Sigmoid colon (tissue), 7 donors: ENCODE measurements at regions of chr19 and their contacts with region 1.

Region 1: GRCh38 chr19:58182989-58183816 is at the start of gene ZNF274:
- DNase-seq: peak; percentile 98
- H3K4me3 ChIP-seq: peak within 1 kb of the TSS; percentile 62 to 77 (median 68)
- H3K27ac ChIP-seq: peak within 1 kb of the TSS; percentile 91 to 97 (median 94)
- H3K4me1 ChIP-seq: peaks cover 0 to 9% (median 0%) of the 10 kb centered on the region in 4 donors
- H3K27me3 ChIP-seq: no peaks in the 10 kb centered on the region
- CTCF ChIP-seq: no peak
- EP300 ChIP-seq: no peak
- POLR2A ChIP-seq: peak; percentile 54 to 57
- total RNA-seq, gene ZNF274: 18.3 to 26.7 (median 22.6) TPM

Region 2: DNA sequence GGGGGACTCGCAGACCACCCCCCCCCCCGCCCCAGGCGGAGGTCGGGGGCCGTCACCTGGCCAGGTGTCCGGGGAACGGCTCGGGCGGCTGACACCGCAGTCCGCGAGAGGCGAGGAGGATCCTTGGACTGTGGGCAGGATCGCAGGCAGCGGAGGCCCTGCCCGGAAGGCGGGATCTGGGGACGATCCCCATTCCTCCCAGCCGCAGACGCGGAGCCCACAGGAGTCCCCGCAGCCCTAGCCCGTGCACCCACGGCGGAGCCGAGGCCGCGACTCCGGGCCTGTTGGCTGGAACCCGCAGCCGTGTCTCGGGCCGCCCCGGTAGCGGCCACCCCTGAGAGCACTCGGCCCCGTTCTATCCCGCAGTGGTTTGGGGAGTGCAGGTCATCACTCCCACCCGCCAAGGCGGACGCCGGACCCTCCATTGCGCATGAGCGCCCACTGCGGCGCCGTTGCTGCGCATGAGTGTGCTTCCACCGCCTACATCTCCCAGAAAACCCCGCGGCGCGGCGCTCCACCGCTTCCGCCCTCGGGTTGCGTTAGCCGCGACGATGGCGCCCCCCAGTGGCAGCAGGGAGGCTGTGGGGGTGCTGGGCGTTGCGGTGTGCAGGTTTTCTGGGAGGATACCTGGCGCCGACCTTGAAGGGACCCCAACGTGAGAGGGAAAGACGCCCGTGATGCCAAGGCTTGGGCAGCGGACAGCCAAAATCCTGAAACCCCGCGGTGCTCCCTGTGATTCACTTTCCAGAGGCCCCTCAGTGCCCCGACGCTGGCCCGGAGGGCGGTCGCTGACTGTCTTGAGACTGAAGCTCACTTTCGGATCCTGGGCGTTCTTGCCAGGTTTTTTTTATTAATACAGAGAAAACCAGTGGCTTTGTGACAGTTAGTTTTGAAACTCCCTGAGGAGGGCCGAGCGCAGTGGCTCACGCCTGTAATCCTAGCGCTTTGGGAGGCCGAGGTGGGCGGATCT is 28.2 kb before region 1 on chr19:
- intact Hi-C with region 1: no loop called
- DNase-seq: peak; percentile 97
- H3K4me3 ChIP-seq: peak overlapping the region; percentile 78 to 100 (median 94)
- H3K27ac ChIP-seq: peak overlapping the region; percentile 88 to 99 (median 98)
- H3K4me1 ChIP-seq: peaks cover 0 to 33% (median 24%) of the 10 kb centered on the region in 4 donors
- H3K27me3 ChIP-seq: no peaks in the 10 kb centered on the region
- CTCF ChIP-seq: peak; percentile 96 to 98 (median 97)
- EP300 ChIP-seq: no peak
- POLR2A ChIP-seq: peak; percentile 31 to 37

Region 3: DNA sequence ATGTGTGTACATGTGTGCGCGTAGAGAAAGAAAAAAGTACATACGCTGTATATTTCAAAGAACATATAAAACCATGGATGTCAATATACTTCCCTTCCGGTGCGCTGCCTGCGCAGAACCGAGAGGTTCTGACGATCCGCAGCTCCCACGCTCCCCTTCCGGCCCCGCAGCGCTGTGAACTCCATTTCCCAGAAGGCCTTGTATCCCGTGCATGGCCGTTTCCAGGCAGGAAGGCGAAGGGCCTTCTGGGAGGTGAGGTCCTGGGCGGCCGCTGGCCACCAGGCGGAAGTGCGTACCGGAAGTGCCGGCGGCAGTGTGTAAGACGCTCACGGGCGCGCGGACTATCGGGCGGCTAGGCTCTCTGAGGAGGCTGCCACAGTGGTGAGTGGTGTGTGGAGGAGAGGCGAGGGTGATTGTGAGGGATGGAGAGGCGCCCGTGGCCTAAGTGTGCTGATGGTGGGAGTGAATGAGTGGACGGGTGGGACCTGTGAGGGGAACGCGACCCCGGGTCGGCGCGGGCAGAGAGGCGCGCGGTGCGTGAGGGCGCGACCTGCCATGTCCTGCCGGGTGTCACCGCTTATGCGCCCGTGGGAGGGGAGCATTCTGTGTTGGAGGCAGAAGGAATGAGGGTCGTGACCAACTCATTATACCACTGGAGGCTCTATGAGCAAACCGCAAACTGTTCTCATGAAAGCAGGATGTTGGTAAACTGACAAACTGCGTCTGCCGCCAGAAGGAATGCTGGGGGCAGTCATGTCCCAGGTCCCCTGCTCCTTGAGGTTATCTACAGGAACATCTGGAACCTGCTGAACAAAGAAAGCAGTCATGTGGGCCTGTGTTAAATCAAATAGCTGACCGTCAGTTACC is 122.1 kb after region 1 on chr19 and contains the start of gene ERVK3-1:
- intact Hi-C with region 1: loop called (anchors 5 kb)
- DNase-seq: peak; percentile 98
- H3K4me3 ChIP-seq: peak within 1 kb of the TSS; percentile 80 to 93 (median 90)
- H3K27ac ChIP-seq: peak within 1 kb of the TSS; percentile 88 to 93 (median 90)
- H3K4me1 ChIP-seq: peaks cover 0 to 17% (median 14%) of the 10 kb centered on the region in 4 donors
- H3K27me3 ChIP-seq: no peaks in the 10 kb centered on the region
- CTCF ChIP-seq: peak in 3 of 4 experiments; percentile 21 to 44 (median 36)
- EP300 ChIP-seq: peak in 1 of 4 donors; percentile 62
- POLR2A ChIP-seq: peak; percentile 83 to 88
- total RNA-seq, gene ERVK3-1: 41.7 to 49.4 (median 44.0) TPM